HepG2 (cell line): ENCODE measurements at regions of chr6 and their contacts with region 1.

Region 1: DNA sequence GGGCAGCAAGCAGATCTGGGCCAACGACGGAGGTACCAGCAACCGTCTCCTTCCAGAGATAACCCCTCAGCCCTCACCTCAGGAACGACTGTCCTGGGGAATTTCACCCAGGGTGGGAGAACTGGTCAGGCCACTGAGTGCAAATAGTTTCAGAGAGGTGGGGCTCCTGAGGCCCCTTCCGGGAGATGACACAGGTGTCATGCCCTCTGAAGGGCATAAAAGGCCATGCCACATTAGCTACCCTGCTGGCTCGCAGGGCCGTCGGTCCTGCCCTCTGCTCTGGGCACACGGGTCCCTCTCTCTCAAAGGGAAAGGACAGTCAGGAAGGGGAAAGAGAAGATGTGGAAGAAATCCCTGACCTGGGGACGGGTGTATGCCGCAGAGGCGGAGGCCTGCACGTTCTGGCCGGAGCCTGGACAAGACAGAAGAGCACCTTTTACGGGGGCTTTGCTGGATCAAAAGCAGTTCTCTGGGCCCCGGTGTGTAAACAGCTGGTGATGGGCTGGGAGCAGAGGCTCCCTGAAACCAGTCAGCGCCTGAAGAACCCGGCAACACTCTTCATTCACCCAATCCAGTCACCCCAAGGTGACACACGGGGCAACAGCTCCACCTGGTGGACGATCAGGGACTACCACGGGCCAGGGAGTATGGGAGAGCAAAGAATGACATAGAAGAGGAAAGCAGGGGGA is 6.4 kb upstream of the TAF8 start:
- DNase-seq: peak; percentile 88
- ATAC-seq: peak; percentile 88
- H3K4me3 ChIP-seq: peak overlapping the region; percentile 50 to 76 (median 53)
- H3K27ac ChIP-seq: no peak overlapping the region
- H3K4me1 ChIP-seq: peaks cover 49% of the 10 kb centered on the region
- H3K27me3 ChIP-seq: no peaks in the 10 kb centered on the region; a peak in 2 of 5 replicates
- CTCF ChIP-seq: peak; percentile 99
- EP300 ChIP-seq: no peak
- POLR2A ChIP-seq: no peak
- RAD21 ChIP-seq: peak; percentile 98

Region 2: DNA sequence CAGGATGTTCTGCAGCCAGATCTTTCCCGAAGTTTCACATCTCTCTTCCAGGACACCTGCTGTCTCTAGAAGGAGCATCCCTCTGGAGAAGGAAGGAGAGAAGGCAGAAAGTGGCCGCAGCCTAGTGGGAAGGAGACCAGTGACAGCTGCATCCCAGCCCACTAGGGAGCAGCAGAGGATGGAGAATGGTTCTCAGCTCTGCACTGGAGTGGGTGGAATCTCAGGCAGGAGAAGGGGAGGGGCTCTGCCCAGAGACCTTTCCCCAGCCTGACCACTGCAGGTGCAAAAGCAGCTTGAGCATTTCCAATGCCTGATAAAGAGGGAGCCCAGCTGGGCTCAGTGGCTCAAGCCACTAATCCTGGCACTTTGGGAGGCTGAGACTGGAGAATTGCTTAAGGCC is 676.2 kb before region 1 on chr6:
- CTCF ChIA-PET with region 1: no interaction called
- POLR2A ChIA-PET with region 1: no interaction called
- in situ Hi-C with region 1: loop called (anchors 25 kb)
- intact Hi-C with region 1: loop called (anchors 5 kb)
- DNase-seq: peak; percentile 78
- ATAC-seq: peak; percentile 94
- H3K4me3 ChIP-seq: no peak overlapping the region
- H3K27ac ChIP-seq: no peak overlapping the region
- H3K4me1 ChIP-seq: peaks cover 8% of the 10 kb centered on the region
- H3K27me3 ChIP-seq: peaks cover 0 to 15% of the 10 kb centered on the region in 2 experiments; a peak in 4 of 5 replicates
- CTCF ChIP-seq: peak; percentile 98
- EP300 ChIP-seq: no peak
- POLR2A ChIP-seq: no peak
- RAD21 ChIP-seq: peak; percentile 94

Region 3: GRCh38 chr6:41723530-41724227 is 320.3 kb before region 1 on chr6:
- CTCF ChIA-PET with region 1: no interaction called
- POLR2A ChIA-PET with region 1: no interaction called
- in situ Hi-C with region 1: loop called (anchors 10 kb)
- intact Hi-C with region 1: loop called (anchors 10 kb)
- DNase-seq: peak; percentile 77
- ATAC-seq: peak; percentile 91
- H3K4me3 ChIP-seq: peak overlapping the region in 1 of 3 experiments; percentile 34; a peak in 2 of 6 replicates
- H3K27ac ChIP-seq: peak overlapping the region; percentile 9
- H3K4me1 ChIP-seq: peaks cover 54% of the 10 kb centered on the region
- H3K27me3 ChIP-seq: no peaks in the 10 kb centered on the region
- CTCF ChIP-seq: peak; percentile 51
- EP300 ChIP-seq: peak; percentile 48 to 66; a peak in 1 of 4 replicates
- POLR2A ChIP-seq: peak in 1 of 2 experiments; percentile 54; a peak in 1 of 4 replicates
- RAD21 ChIP-seq: 0 out of 2 replicates have a peak, but pooled peaks have one; percentile 23

Region 4: GRCh38 chr6:41801380-41801779 is 242.6 kb before region 1 on chr6:
- CTCF ChIA-PET with region 1: interaction called, 5 read pairs
- POLR2A ChIA-PET with region 1: no interaction called
- in situ Hi-C with region 1: no loop called
- intact Hi-C with region 1: loop called (anchors 1 kb)
- DNase-seq: no peak
- ATAC-seq: peak; percentile 53; the same call in 2 of the 3 replicates
- H3K4me3 ChIP-seq: no peak overlapping the region
- H3K27ac ChIP-seq: no peak overlapping the region
- H3K4me1 ChIP-seq: no peaks in the 10 kb centered on the region
- H3K27me3 ChIP-seq: no peaks in the 10 kb centered on the region
- CTCF ChIP-seq: peak; percentile 23; the same call in 1 of the 2 replicates
- EP300 ChIP-seq: no peak
- POLR2A ChIP-seq: no peak
- RAD21 ChIP-seq: peak; percentile 16; the same call in 1 of the 2 replicates

Region 5: GRCh38 chr6:41901882-41902519 is 141.9 kb before region 1 on chr6:
- CTCF ChIA-PET with region 1: interaction called, 4 read pairs
- POLR2A ChIA-PET with region 1: no interaction called
- in situ Hi-C with region 1: no loop called
- intact Hi-C with region 1: loop called (anchors 1 kb)
- DNase-seq: no peak
- ATAC-seq: no peak
- H3K4me3 ChIP-seq: no peak overlapping the region
- H3K27ac ChIP-seq: no peak overlapping the region
- H3K4me1 ChIP-seq: no peaks in the 10 kb centered on the region
- H3K27me3 ChIP-seq: no peaks in the 10 kb centered on the region
- CTCF ChIP-seq: peak; percentile 54
- EP300 ChIP-seq: no peak
- POLR2A ChIP-seq: no peak
- RAD21 ChIP-seq: no peak

Region 6: GRCh38 chr6:41936073-41936837 is 107.7 kb before region 1 on chr6:
- CTCF ChIA-PET with region 1: interaction called, 7 read pairs
- POLR2A ChIA-PET with region 1: interaction called, 4 read pairs
- in situ Hi-C with region 1: loop called (anchors 5 kb)
- intact Hi-C with region 1: loop called (anchors 1 kb)
- DNase-seq: peak; percentile 87
- ATAC-seq: peak; percentile 80
- H3K4me3 ChIP-seq: no peak overlapping the region
- H3K27ac ChIP-seq: peak overlapping the region; percentile 3
- H3K4me1 ChIP-seq: peaks cover 30% of the 10 kb centered on the region
- H3K27me3 ChIP-seq: no peaks in the 10 kb centered on the region
- CTCF ChIP-seq: peak; percentile 92
- EP300 ChIP-seq: peak in 1 of 2 experiments; percentile 13; a peak in 1 of 4 replicates
- POLR2A ChIP-seq: peak in 1 of 2 experiments; percentile 9; a peak in 1 of 4 replicates
- RAD21 ChIP-seq: peak; percentile 72